ENCODE measurements at regions of chr7 and their contacts with region 1.

Region 1: DNA sequence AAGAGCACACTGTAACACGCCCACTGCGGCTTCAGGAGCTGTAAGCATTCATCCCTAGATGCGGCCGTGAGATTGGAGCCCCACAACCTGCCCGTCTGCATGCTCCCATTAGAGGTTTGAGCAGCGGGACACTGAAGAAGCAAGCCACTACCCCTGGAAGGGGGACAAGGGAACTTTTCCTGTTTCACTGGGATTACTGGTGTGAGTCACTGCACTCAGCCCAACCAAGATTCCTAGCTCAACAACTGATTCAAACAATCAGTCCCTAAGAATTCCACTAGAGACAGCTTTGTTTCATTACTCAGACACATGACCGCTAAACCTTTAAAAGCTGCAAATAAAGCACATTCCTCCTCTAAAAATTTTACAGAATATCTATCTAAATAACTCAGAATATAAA is 69.8 kb downstream of the ORC5 start:
- DNase-seq: no peak
- H3K4me3 Mint-ChIP-seq: no peak overlapping the region
- H3K27ac Mint-ChIP-seq: no peak overlapping the region
- H3K4me1 Mint-ChIP-seq: peaks cover 9% of the 10 kb centered on the region
- H3K27me3 Mint-ChIP-seq: no peaks in the 10 kb centered on the region

Region 2: DNA sequence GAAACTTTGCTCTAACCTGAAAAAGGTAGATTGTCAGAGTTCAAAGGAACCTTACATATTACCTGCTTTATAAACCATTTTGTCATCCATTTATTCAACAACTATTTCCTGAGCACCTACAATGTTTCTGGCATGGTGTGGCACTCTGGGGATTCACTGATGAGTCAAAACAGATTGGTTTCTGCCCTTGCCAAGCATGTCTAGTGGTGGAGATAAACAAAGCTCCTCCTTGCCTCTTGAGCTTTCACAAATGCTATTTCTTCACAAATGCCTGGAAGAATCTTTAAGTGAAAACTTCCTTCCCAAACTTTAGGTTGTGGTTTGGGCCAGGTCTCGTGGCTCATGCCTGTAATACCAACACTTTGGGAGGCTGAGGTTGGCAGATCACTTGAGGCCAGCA is 63.4 kb before region 1 on chr7:
- intact Hi-C with region 1: no loop called
- DNase-seq: no peak
- H3K4me3 Mint-ChIP-seq: no peak overlapping the region
- H3K27ac Mint-ChIP-seq: no peak overlapping the region
- H3K4me1 Mint-ChIP-seq: no peaks in the 10 kb centered on the region
- H3K27me3 Mint-ChIP-seq: no peaks in the 10 kb centered on the region

Region 3: DNA sequence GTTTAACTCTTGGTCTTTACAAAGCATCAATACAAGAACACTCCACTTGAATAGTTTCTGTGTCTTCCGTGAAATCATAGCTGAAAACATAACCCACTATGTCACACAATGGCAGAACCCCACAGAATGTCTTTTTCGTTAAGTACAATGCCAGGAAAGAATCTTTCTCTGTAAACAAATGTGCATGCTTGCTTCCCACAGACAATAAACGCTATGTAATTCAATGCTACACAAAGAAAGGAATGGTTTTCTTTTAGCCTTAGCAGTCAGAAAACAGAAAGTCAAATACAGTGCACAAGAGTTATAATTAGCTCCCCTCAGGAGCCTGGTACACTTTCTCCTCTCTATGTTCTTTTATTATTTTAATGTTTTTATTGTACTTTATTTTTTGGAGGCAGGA is 1064.6 kb after region 1 on chr7:
- intact Hi-C with region 1: loop called (anchors 10 kb)
- DNase-seq: no peak
- H3K4me3 Mint-ChIP-seq: no peak overlapping the region
- H3K27ac Mint-ChIP-seq: no peak overlapping the region
- H3K4me1 Mint-ChIP-seq: peaks cover 34% of the 10 kb centered on the region
- H3K27me3 Mint-ChIP-seq: no peaks in the 10 kb centered on the region